ENCODE measurements at regions of chr19 and their contacts with region 1.

Region 1: GRCh38 chr19:24054549-24054935 is 32.4 kb upstream of the ZNF254 start:
- DNase-seq: no peak
- H3K4me3 Mint-ChIP-seq: no peak overlapping the region
- H3K27ac Mint-ChIP-seq: peak overlapping the region; percentile 66
- H3K4me1 Mint-ChIP-seq: peaks cover 20% of the 10 kb centered on the region
- H3K27me3 Mint-ChIP-seq: no peaks in the 10 kb centered on the region

Region 2: DNA sequence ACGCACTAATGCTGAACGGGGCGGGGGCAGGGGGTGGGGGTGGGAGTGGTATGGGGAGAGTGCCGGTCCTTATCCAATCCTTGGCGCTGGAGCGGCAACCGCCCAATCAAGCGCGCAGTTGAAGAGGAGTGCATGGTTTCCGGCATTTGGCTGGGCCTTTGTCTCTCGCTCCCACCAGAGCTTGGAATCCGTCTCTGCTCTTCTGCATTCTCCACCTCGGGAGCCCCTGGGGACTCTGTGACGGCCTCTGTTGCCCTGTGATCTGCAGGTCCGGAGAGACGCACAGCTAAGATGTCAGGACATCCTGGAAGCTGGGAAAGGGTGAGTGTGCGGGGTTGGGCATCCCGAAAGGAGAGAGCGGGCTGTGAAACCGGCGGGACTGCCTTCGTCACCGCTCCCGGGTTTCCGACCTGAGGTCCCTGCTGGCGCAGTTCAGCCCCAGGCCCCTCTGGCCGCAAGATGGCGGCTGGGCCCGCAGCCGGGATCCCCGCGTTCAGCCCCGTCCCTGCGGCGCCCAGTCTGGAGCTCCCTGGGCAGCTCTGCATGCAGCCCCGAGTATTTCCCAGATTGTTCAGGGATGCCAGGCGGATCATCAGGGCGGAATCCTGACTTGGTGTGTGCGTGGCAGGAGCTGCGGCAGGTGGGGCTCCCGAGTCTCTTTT is 21.1 kb before region 1 on chr19:
- intact Hi-C with region 1: loop called (anchors 2 kb)
- DNase-seq: peak; percentile 79
- H3K4me3 Mint-ChIP-seq: peak overlapping the region; percentile 100
- H3K27ac Mint-ChIP-seq: peak overlapping the region; percentile 98
- H3K4me1 Mint-ChIP-seq: peaks cover 20% of the 10 kb centered on the region
- H3K27me3 Mint-ChIP-seq: no peaks in the 10 kb centered on the region

Region 3: DNA sequence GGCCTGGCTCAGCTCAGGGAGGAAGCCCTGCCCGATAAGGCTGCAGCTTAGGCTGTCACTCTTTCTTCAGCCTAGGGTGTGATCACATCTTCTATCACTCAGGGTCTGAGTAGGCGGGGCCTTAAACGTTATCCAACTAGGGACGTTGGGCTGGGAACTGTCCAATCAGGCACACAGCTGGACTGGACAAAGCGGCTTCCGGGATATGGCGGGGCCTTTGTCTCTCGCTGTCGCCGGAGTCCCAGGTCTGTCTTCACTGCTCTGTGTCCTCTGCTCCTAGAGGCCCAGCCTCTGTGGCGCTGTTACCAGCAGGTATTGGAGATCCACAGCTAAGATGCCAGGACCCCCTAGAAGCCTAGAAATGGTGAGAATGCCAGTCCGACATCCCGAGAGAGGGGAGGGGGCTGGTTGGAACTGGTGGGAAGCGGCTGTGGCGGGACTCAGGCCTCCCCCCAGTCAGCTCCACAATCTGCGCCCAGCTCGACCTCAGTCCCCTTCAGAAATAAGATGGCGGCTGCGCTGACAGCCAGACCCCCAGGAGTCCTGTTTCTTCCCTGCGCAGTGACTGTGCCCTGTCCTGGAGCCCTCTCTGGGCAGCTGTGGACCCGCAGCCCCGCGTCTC is 32.5 kb after region 1 on chr19 and contains the start of gene ZNF254:
- intact Hi-C with region 1: loop called (anchors 5 kb)
- DNase-seq: peak; percentile 82
- H3K4me3 Mint-ChIP-seq: peak within 1 kb of the TSS; percentile 96
- H3K27ac Mint-ChIP-seq: peak within 1 kb of the TSS; percentile 97
- H3K4me1 Mint-ChIP-seq: peaks cover 3% of the 10 kb centered on the region
- H3K27me3 Mint-ChIP-seq: no peaks in the 10 kb centered on the region
- total RNA-seq, gene ZNF254: 8.7 and 11.5 TPM in 2 replicates